ENCODE measurements at regions of chr9 and their contacts with region 1.

Region 1: DNA sequence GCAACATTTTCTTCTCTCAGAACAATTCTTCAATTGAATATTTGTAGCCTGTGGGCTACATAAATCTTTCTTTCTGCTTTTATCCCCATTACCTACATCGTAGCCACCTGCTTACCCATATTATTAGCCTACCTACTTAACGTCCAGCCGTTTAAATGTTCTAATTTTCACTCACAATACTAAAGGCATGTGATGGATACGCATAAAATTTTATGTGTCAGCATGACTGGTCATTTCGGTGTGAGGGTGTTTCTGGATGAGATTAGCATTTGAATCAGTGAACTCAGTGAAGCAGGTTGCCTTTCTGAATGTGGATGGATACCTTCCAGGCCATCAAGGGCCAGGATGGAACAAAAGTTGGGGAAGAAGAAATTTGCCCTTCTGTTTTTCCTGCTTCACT is 1722.5 kb upstream of the ACO1 start:
- DNase-seq: no peak
- ATAC-seq: no peak
- H3K4me3 ChIP-seq: no peak overlapping the region
- H3K27ac ChIP-seq: no peak overlapping the region
- H3K4me1 ChIP-seq: no peaks in the 10 kb centered on the region
- H3K27me3 ChIP-seq: no peaks in the 10 kb centered on the region
- CTCF ChIP-seq: no peak
- POLR2A ChIP-seq: no peak

Region 2: GRCh38 chr9:30534896-30535295 is 127.0 kb before region 1 on chr9:
- intact Hi-C with region 1: no loop called
- DNase-seq: no peak
- ATAC-seq: no peak
- H3K4me3 ChIP-seq: no peak overlapping the region
- H3K27ac ChIP-seq: no peak overlapping the region
- H3K4me1 ChIP-seq: no peaks in the 10 kb centered on the region
- H3K27me3 ChIP-seq: no peaks in the 10 kb centered on the region
- CTCF ChIP-seq: no peak
- POLR2A ChIP-seq: no peak

Region 3: DNA sequence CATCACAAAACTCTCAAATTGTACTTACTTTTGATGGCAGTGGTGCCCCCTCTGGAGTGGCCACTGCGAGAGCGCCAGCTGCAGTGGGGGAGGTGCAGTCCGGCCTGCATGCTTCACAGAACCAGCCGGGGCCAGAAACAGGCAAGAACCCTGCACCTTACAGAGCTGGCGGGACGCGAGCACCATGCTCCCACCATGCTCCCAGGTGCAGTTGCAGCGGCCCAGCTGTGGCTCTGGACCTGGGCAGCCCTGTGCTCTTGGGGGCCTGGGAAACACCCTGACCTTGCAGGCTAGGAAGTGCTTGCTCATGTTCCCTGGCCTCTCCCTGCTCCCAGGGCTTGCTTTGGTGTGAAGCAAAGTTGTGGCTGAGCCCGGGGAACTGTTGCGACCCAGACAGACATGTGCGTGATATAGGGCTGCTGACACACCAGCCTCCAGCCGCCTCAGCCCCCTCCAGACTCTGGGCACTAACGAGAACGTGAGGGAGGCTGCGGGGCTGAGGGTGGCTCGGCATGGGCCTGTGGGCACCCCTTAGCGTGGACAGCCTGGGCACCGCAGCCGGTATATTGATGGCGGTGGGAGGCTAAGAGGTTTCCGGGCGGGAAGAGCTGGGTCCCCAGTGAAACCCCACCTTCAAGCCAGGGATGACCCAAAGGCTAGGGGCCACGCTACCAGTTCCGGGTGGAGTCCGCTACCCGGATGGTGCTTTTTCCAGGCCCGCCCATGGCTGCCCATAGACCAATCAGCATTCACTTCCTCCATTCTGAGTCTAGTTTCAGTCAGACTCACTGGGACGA is 87.4 kb before region 1 on chr9:
- intact Hi-C with region 1: no loop called
- DNase-seq: peak in 2 of 5 donors; percentile 15 to 42
- ATAC-seq: no peak
- H3K4me3 ChIP-seq: no peak overlapping the region
- H3K27ac ChIP-seq: no peak overlapping the region
- H3K4me1 ChIP-seq: no peaks in the 10 kb centered on the region
- H3K27me3 ChIP-seq: no peaks in the 10 kb centered on the region
- CTCF ChIP-seq: no peak
- POLR2A ChIP-seq: no peak

Region 4: DNA sequence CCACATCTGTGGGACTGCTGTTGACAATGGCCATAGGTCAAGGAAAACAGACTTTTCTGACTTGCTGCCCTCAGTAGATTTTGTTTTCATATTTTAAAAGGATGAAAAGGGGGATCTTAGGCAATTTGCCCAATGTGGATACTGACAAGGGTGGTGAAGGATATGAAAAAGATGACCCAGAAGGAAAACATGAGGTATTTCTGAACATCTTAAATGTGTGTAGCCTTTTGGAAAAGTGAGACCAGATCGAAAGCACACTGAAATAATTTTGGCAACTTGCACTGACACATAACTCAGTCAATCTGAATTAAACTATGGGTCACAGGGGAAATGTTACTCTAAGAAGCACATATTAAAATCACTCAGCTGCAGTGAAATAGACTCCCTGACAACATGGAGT is 70.5 kb before region 1 on chr9:
- intact Hi-C with region 1: loop called in 1 of 10 experiments (anchors 10 kb)
- DNase-seq: no peak
- ATAC-seq: no peak
- H3K4me3 ChIP-seq: no peak overlapping the region
- H3K27ac ChIP-seq: no peak overlapping the region
- H3K4me1 ChIP-seq: no peaks in the 10 kb centered on the region
- H3K27me3 ChIP-seq: no peaks in the 10 kb centered on the region
- CTCF ChIP-seq: no peak
- POLR2A ChIP-seq: no peak